Common myeloid progenitor, CD34-positive (primary cell): ENCODE measurements at regions of chr20 and their contacts with region 1.

Region 1: DNA sequence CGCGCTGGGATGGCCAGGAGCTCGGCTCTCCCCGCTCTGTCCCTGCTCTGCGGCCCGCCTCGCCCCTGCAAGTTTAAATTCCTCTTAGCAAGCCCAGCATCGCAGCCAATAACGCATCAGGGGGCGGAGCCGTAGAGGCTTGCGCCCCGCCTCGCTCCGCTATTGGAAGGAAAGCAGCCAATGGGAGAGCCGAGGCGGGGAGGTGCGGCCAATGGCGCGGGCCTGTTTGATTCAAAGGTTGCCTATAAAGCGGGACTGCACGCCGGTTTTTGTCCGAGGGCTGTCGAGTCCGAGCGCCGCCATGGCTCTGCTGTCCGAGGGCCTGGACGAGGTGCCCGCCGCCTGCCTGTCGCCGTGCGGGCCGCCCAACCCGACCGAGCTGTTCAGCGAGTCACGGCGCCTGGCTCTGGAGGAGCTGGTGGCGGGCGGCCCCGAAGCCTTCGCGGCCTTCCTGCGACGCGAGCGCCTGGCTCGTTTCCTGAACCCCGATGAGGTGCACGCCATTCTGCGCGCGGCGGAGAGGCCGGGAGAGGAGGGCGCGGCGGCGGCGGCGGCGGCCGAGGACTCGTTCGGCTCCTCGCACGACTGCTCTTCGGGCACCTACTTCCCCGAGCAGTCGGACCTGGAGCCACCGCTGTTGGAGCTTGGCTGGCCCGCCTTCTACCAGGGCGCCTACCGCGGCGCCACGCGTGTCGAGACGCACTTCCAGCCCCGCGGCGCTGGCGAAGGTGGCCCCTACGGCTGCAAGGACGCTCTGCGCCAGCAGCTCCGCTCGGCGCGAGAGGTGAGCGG is at the start of gene FAM83D:
- DNase-seq: peak; percentile 98 to 99 (median 99)
- H3K4me3 ChIP-seq: peak within 1 kb of the TSS; percentile 59 to 95 (median 80)
- H3K27ac ChIP-seq: peak within 1 kb of the TSS in 1 of 2 experiments; percentile 12
- H3K4me1 ChIP-seq: peaks cover 9 to 27% (median 20%) of the 10 kb centered on the region in 4 experiments
- H3K27me3 ChIP-seq: no peaks in the 10 kb centered on the region

Region 2: GRCh38 chr20:38873050-38873581 is 53.2 kb before region 1 on chr20:
- CTCF ChIA-PET with region 1: no interaction called
- POLR2A ChIA-PET with region 1: no interaction called
- DNase-seq: peak in 2 of 3 donors; percentile 18 to 46
- H3K4me3 ChIP-seq: no peak overlapping the region
- H3K27ac ChIP-seq: peak overlapping the region in 1 of 2 experiments; percentile 21
- H3K4me1 ChIP-seq: peaks cover 11 to 32% (median 28%) of the 10 kb centered on the region in 4 experiments
- H3K27me3 ChIP-seq: no peaks in the 10 kb centered on the region

Region 3: GRCh38 chr20:38962044-38962927 is 35.9 kb after region 1 on chr20 and contains the start of gene DHX35:
- CTCF ChIA-PET with region 1: interaction called, 11 read pairs
- POLR2A ChIA-PET with region 1: no interaction called
- DNase-seq: peak; percentile 96 to 99 (median 98)
- H3K4me3 ChIP-seq: peak within 1 kb of the TSS; percentile 85 to 100 (median 95)
- H3K27ac ChIP-seq: peak within 1 kb of the TSS; percentile 83 to 93
- H3K4me1 ChIP-seq: peaks cover 11 to 24% (median 18%) of the 10 kb centered on the region in 4 experiments
- H3K27me3 ChIP-seq: no peaks in the 10 kb centered on the region